Lower leg skin (tissue), 4 donors: ENCODE measurements at regions of chr4 and their contacts with region 1.

Region 1: DNA sequence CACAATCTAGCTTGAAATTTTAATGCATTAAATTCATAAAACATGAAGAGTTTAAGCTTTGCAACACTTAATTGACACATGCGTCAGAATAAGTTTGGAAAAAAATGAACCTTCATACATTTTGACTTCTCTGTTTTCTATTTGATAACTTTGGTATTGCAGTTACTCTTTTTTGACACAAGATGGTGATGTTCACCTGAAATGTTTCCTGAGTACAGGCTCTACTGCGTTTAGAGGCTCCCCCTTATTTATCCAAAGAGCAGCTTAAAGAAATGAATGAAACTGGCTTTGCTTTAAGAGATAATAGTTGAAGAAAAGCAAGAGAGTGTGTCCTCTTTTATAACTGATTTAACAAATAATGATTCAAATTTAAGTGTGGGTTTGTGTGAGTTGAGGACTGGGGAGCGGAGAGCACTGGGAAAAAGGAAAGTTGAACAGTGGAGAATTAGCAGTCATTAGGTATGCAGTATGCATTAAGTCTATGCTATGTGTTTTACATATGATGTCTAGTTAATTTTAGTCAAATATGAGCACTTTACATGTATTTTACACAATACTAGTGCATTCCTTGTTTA is 180.6 kb upstream of the NUDT6 start:
- DNase-seq: no peak
- H3K4me3 ChIP-seq: no peak overlapping the region
- CTCF ChIP-seq: no peak
- POLR2A ChIP-seq: no peak

Region 2: DNA sequence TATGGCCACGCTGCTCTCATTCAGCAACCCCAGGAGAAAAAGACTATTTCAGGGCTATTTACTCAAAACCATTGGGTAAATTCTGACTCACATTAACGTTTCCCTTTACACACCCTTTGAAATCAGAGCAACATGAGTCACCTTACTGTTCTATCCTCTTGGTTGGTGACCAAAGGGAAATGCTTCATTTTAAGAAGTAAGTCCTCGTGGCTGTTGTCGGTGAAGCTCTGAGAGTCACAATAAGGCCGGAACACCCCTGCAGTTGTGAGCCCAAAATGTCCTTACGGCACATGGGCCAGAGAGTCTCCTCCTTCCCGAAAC is 237.4 kb after region 1 on chr4:
- intact Hi-C with region 1: loop called (anchors 10 kb)
- DNase-seq: no peak
- H3K4me3 ChIP-seq: no peak overlapping the region
- CTCF ChIP-seq: no peak
- POLR2A ChIP-seq: no peak

Region 3: GRCh38 chr4:124262211-124263179 is 1159.5 kb after region 1 on chr4:
- intact Hi-C with region 1: loop called (anchors 10 kb)
- DNase-seq: peak; percentile 71 to 87
- H3K4me3 ChIP-seq: no peak overlapping the region
- CTCF ChIP-seq: no peak
- POLR2A ChIP-seq: no peak